Heart left ventricle (tissue), 16 donors: ENCODE measurements at regions of chr1 and their contacts with region 1.

Region 1: DNA sequence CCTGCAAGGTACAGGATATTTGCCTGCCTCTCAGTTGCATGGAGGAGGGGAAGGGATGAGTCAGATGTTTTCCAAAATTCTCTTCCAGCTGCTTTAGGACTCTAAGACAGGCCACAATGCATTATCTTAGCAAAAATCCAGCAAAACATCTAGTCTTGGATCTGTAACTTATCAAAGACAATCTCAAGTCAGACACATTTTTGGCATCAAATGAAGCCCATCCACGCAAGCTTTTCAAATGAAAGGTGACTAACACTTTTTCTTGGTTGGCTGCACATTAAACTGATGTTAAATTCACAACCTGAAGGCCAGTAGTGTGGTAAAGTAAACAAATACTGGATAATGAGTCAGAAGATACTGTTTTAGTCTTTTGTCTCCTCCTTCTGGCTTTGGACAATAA is 21.3 kb downstream of the FAM78B start:
- DNase-seq: no peak
- ATAC-seq: no peak
- H3K4me3 ChIP-seq: no peak overlapping the region
- H3K27ac ChIP-seq: no peak overlapping the region
- H3K4me1 ChIP-seq: no peaks in the 10 kb centered on the region
- H3K27me3 ChIP-seq: no peaks in the 10 kb centered on the region
- CTCF ChIP-seq: no peak
- POLR2A ChIP-seq: no peak

Region 2: DNA sequence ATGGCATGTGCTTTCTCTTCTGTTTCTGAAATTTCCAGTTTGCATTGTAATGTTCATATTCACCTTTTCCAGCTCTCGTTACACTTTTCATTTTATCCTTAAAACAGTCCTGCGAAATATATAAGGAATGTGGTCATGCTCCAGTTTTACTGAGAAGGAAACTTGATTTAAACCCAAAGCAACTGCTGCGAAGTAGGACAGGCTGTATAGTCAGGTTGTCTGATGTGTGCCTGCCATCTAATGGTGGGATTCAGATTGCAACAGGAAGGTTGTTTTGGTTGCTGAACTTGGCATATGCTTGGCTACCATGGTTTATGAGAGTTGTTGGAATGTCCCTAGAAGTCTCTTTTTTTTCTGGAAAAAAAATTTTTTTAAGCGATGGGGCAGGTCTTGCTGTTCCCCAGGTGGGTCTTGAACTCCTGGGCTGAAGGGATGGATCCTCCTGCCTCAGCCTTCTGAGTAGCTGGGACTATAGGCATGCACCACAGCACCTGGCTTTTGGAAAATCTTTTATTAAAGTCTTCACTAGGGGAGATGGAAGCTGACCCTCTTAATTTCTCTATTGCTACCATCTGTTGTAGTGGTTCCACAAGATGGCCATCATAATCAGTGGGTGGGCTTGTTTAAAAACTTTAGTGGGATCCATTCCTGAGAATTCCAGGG is 231.2 kb before region 1 on chr1:
- intact Hi-C with region 1: no loop called
- DNase-seq: peak in 2 of 5 donors; percentile 50 to 65
- ATAC-seq: peak; percentile 53 to 86 (median 78)
- H3K4me3 ChIP-seq: no peak overlapping the region
- H3K27ac ChIP-seq: no peak overlapping the region
- H3K4me1 ChIP-seq: peaks cover 0 to 20% (median 10%) of the 10 kb centered on the region in 12 donors
- H3K27me3 ChIP-seq: no peaks in the 10 kb centered on the region
- CTCF ChIP-seq: peak; percentile 75 to 94 (median 84)
- POLR2A ChIP-seq: no peak

Region 3: GRCh38 chr1:166119471-166119965 is 26.0 kb before region 1 on chr1:
- intact Hi-C with region 1: no loop called
- DNase-seq: no peak
- ATAC-seq: no peak
- H3K4me3 ChIP-seq: no peak overlapping the region
- H3K27ac ChIP-seq: no peak overlapping the region
- H3K4me1 ChIP-seq: no peaks in the 10 kb centered on the region
- H3K27me3 ChIP-seq: no peaks in the 10 kb centered on the region
- CTCF ChIP-seq: no peak
- POLR2A ChIP-seq: no peak

Region 4: GRCh38 chr1:166190400-166190799 is 44.9 kb after region 1 on chr1:
- intact Hi-C with region 1: loop called in 1 of 10 experiments (anchors 2 kb)
- DNase-seq: no peak
- ATAC-seq: no peak
- H3K4me3 ChIP-seq: no peak overlapping the region
- H3K27ac ChIP-seq: no peak overlapping the region
- H3K4me1 ChIP-seq: no peaks in the 10 kb centered on the region
- H3K27me3 ChIP-seq: peaks cover 0 to 9% (median 0%) of the 10 kb centered on the region in 9 donors
- CTCF ChIP-seq: no peak
- POLR2A ChIP-seq: no peak